Posterior cingulate gyrus (tissue), 11 donors: ENCODE measurements at regions of chr15 and their contacts with region 1.

Region 1: DNA sequence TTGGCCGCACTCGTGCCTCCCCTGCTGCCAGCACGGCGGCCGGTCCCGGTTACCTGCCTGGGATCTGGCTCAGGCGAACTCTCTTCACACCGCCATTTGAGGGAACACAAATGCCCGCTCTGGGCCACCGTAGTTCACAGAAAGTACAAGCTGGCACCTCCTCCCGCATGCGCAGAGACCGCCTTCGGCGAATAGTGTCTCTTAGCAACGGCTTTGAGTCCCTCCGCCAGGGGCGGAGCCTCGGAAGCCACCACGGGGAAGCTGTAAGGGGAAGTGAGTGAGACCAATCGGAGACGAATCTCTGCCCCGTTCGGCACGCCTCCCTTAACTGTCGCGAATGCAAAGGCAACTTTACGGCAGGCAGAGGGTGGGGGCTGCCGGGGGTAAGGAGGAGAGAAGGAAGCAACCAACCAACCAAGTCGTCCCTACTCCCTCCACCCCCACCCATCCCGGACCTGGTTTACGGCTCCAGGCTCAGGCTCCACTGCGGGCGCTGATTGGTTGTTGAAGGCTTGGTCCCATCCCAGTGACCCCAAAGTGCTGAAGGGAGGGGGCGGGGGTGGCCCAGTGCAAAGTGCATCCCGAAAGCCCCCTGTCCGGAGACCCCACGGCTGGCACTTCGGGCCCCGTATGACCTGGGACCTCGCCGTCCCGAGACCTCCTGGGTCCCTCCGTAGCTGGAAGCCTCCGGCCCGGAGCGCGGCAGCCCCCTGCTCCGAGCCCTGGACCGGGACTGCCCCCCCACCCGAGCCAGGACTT is at the starts of genes ASB7 and LINS1:
- DNase-seq: peak; percentile 99 to 100 (median 100)

Region 2: GRCh38 chr15:100671858-100672543 is 69.8 kb after region 1 on chr15:
- intact Hi-C with region 1: no loop called
- DNase-seq: peak in 1 of 10 donors; percentile 73

Region 3: DNA sequence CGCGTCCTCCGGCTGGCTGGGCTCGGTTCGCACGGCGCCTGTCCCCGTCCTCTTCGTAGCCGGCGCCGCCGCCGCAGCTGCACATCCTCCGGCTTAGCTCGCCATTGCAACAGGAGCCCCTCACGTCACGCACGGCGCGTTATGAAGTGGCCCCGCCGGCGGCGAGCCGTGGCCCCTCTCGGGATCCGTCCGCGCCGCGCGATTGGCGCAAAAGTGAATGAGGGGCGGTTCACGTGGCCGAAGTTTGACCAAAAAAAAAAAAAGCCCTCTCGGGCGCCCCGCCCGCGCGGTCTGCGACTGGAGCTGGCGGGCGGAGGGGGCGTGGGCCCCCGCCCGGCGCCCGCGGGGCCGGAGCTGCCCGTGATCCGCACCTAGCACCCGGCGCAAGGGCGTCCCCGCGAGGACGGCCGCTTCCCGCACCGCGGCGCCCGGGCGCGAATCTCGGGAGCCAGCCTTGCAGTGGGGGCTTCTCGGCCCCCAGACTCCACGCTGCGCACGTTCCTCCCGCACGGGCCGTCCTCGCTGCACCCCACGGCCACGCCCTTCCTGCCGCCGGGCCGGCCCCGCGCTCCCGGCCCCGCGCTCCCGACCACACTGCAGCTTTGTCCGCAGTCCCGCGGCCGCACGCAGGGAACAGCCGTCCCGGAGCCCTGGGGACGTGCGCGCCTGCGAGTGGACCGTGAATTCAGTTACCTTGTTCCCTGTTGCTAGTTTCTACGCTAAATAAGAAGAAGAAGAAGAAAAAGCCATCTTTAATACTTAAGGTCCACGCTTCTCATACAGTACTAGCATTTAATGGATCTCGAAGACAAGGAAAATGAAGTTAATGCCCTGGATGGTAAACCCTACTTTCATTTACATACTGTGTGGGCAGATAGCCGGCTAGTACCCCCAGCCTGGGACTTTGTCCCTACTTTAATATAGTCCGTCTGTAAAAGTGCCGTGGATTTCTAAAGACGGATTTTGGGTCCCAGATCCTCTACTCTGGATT is 649.9 kb after region 1 on chr15 and contains the start of gene CHSY1:
- intact Hi-C with region 1: loop called (anchors 2 kb)
- DNase-seq: peak; percentile 85 to 98 (median 89)